PC-9 (cell line): ENCODE measurements at regions of chr10 and their contacts with region 1.

Region 1: DNA sequence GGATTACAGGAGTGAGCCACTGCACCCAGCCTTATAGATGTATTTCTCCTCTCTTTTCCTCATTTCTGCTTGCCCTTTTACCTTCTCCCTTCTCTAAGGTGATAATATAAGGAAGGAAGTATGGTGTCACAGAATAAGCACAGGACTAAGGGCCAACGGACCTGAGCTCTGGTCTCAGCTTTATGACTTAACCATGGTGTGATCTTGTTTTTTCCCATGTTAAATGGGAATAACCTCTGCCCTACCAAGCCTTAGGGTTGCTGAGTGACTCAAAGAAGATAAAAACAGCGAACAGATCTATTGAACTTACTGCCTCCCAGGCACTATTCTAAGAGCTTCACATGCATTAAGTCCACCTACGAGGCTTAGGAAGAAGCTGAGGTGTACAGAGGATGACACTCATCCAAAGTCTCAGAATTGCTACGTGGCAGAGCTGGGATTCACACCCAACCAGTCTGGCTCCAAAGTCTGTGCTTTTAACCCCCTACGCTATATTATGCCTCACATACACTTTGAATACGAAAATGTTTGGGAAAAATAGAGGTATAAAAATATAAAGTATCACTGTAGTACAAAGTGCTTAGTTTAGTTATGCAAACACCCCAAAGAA is 5.6 kb downstream of the UROS start:
- DNase-seq: no peak
- H3K4me3 ChIP-seq: no peak overlapping the region
- H3K27ac ChIP-seq: no peak overlapping the region
- H3K4me1 ChIP-seq: no peaks in the 10 kb centered on the region
- H3K27me3 ChIP-seq: no peaks in the 10 kb centered on the region
- CTCF ChIP-seq: no peak

Region 2: GRCh38 chr10:126475941-126476645 is 658.7 kb after region 1 on chr10:
- CTCF ChIA-PET with region 1: no interaction called
- POLR2A ChIA-PET with region 1: no interaction called
- intact Hi-C with region 1: no loop called
- DNase-seq: no peak
- H3K4me3 ChIP-seq: no peak overlapping the region
- H3K27ac ChIP-seq: no peak overlapping the region
- H3K4me1 ChIP-seq: no peaks in the 10 kb centered on the region
- H3K27me3 ChIP-seq: no peaks in the 10 kb centered on the region
- CTCF ChIP-seq: no peak

Region 3: GRCh38 chr10:126598003-126598402 is 780.6 kb after region 1 on chr10:
- CTCF ChIA-PET with region 1: interaction called, 24 read pairs
- POLR2A ChIA-PET with region 1: no interaction called
- intact Hi-C with region 1: no loop called
- DNase-seq: peak in 1 of 2 experiments; percentile 46
- H3K4me3 ChIP-seq: no peak overlapping the region
- H3K27ac ChIP-seq: no peak overlapping the region
- H3K4me1 ChIP-seq: no peaks in the 10 kb centered on the region; the same call in 1 of the 2 replicates
- H3K27me3 ChIP-seq: no peaks in the 10 kb centered on the region
- CTCF ChIP-seq: peak; percentile 60